MCF 10A (cell line): ENCODE measurements at regions of chr1 and their contacts with region 1.

Region 1: GRCh38 chr1:89670163-89670562 is 37.2 kb downstream of the LRRC8C start:
- DNase-seq: no peak
- H3K4me3 Mint-ChIP-seq: no peak overlapping the region
- H3K27ac Mint-ChIP-seq: no peak overlapping the region
- H3K4me1 Mint-ChIP-seq: peaks cover 21% of the 10 kb centered on the region
- H3K27me3 Mint-ChIP-seq: no peaks in the 10 kb centered on the region
- CTCF ChIP-seq: no peak

Region 2: GRCh38 chr1:89358287-89358893 is 311.8 kb before region 1 on chr1:
- CTCF ChIA-PET with region 1: no interaction called
- POLR2A ChIA-PET with region 1: no interaction called
- intact Hi-C with region 1: no loop called
- DNase-seq: peak; percentile 81
- H3K4me3 Mint-ChIP-seq: no peak overlapping the region
- H3K27ac Mint-ChIP-seq: no peak overlapping the region
- H3K4me1 Mint-ChIP-seq: peaks cover 10% of the 10 kb centered on the region
- H3K27me3 Mint-ChIP-seq: no peaks in the 10 kb centered on the region
- CTCF ChIP-seq: peak; percentile 60

Region 3: DNA sequence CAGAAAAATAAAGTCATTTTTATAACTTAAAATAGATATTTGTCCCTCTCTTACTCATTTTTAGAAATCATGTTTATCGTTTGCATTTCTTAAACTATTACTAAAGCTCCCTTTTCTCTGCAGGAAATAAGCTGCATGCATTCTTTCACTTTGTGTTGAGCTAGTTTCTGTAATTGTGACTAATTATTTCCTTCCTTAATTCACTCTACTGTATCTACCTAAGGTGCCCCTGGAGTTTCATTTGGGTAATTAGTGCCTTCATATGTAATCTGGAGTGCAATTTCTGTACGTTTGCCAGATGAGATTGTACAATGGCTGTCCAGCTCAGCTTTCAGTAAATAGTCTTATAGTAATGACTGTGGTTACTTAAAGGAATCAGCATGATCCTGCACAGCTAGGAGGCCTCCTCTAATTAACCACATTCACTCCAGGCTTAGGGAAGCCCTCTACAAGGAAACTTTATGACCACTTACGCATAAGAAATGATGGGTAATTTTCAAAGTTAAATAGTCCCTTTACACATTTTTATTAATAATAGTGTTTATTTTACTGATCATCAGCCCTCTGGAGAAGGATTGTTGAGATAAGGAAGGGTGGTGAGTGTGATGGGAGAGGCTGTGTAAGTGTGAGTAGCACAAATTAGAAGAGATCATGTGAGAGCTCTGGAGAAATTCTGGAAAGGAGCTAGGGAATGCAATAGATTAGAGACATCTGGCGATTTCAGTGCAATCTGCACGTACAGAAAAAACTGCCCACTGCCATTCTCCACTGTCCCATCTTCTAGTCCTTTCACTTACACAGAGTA is 49.5 kb after region 1 on chr1:
- CTCF ChIA-PET with region 1: no interaction called
- POLR2A ChIA-PET with region 1: no interaction called
- intact Hi-C with region 1: loop called (anchors 5 kb)
- DNase-seq: peak; percentile 56
- H3K4me3 Mint-ChIP-seq: peak overlapping the region; percentile 27
- H3K27ac Mint-ChIP-seq: peak overlapping the region; percentile 21
- H3K4me1 Mint-ChIP-seq: peaks cover 20% of the 10 kb centered on the region
- H3K27me3 Mint-ChIP-seq: no peaks in the 10 kb centered on the region
- CTCF ChIP-seq: no peak